ENCODE measurements at regions of chr15 and their contacts with region 1.

Region 1: DNA sequence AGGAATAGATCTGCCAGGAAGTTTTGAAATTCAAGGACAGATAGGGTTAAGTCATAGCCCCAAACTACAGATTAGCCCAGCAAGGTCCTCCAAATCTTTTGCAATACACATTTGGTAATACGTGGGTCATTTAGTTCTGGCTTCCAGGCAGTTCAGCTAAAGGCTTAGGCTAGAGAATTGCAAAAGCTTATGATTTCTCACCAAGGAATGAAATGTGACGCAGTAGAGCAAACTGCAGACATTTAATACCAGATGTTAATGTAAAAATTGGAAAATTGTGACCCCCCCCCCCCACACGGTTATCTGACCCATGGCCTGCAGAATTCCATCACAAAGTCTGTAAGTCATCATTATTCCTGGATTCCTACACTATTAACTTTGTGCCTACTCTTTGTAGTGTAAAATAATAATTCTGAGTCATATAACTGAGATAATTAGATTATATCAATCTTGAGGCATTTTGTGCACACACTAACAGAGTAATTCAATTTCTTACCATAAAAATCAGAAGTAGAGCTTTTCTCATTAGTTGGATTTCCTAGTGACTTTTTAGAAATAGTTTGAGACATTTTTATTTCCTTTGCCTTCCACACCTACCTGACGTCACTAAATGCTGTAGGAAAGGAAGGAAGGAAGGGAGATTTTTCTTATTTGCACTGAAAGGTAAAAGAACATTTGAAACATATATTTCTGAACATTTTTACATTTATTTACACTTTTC is 235.2 kb downstream of the DTWD1 start:
- DNase-seq: peak; percentile 99
- ATAC-seq: peak; percentile 74
- H3K4me3 ChIP-seq: no peak overlapping the region
- H3K27ac ChIP-seq: peak overlapping the region; percentile 100; the same call in 1 of the 2 replicates
- H3K4me1 ChIP-seq: peaks cover 24% of the 10 kb centered on the region
- H3K27me3 ChIP-seq: no peaks in the 10 kb centered on the region
- CTCF ChIP-seq: no peak
- POLR2A ChIP-seq: no peak
- RAD21 ChIP-seq: peak; percentile 17; the same call in 1 of the 2 replicates

Region 2: DNA sequence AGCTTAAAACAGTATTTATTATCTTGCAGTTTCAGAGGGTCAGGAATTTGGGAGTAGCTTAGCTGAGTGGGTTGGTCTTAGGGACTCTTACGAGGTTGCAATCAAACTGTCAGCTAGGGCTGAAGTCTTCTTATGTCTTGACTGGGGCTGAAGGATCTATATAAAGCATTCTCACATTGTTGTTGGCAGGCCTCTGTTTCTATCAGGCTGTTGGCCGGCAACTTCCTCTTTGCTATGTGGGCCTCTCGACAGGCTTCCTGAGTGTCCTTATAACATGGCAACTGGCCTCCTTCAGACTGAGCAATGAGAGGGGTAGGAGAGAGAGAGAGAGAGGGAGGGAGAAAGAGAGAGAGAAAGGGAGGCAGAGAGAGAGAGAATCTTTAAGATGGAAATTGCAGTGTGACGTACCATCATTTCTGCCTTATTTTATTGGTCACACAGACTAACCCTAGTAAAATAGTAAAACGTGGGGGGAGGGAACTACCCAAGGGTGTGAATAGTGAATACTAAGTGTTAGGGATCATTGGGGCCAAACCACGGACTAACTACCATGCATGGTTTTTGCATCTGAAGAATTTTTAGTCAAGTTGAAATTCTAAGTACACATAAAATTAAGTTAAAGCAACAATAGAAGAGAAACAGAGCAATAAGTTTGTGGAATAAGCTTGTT is 417.0 kb before region 1 on chr15:
- CTCF ChIA-PET with region 1: no interaction called
- POLR2A ChIA-PET with region 1: no interaction called
- dilution Hi-C with region 1: no loop called
- in situ Hi-C with region 1: no loop called
- intact Hi-C with region 1: loop called (anchors 5 kb)
- DNase-seq: no peak
- ATAC-seq: no peak; the same call in 1 of the 2 replicates
- H3K4me3 ChIP-seq: no peak overlapping the region
- H3K27ac ChIP-seq: peak overlapping the region; percentile 21
- H3K4me1 ChIP-seq: peaks cover 22% of the 10 kb centered on the region
- H3K27me3 ChIP-seq: no peaks in the 10 kb centered on the region
- CTCF ChIP-seq: no peak
- POLR2A ChIP-seq: no peak
- RAD21 ChIP-seq: no peak

Region 3: GRCh38 chr15:49901996-49902684 is 46.1 kb after region 1 on chr15:
- CTCF ChIA-PET with region 1: no interaction called
- POLR2A ChIA-PET with region 1: no interaction called
- dilution Hi-C with region 1: no loop called
- in situ Hi-C with region 1: no loop called
- intact Hi-C with region 1: no loop called
- DNase-seq: peak; percentile 65
- ATAC-seq: peak; percentile 65
- H3K4me3 ChIP-seq: no peak overlapping the region
- H3K27ac ChIP-seq: peak overlapping the region; percentile 98
- H3K4me1 ChIP-seq: peaks cover 24% of the 10 kb centered on the region
- H3K27me3 ChIP-seq: no peaks in the 10 kb centered on the region
- CTCF ChIP-seq: peak; percentile 66
- POLR2A ChIP-seq: no peak
- RAD21 ChIP-seq: peak; percentile 65

Region 4: DNA sequence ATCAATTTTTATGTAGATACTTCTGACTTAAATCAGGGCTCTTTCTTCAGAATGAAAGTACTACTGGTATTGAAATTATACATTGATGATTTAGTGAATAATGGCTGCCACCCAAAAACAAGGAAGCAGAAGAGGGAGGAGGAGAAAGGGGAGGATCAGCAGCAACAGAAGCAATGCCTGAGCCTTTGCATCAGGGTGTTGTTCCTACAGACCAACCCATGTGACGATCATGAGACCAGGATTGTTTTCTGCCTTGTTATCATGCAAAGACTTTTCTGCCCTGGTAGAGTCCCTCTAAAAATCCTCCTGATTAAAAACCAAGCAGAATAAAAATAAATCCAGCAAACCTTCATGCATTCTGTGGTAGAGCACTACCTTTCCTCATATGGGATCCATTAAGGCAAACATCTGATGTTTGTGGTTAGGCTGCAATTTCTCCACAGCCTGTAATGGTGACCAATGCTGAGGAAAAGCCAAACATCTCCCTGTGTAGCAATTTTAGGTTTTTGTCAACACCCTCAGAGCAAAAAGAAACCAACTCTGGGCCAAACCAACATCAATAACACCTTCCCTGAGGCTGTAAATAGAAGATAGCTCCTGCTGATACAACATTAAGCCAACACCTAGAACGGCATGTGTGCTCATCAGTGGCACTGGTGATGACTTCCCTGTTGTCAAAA is 71.3 kb after region 1 on chr15:
- CTCF ChIA-PET with region 1: no interaction called
- POLR2A ChIA-PET with region 1: no interaction called
- dilution Hi-C with region 1: no loop called
- in situ Hi-C with region 1: no loop called
- intact Hi-C with region 1: no loop called
- DNase-seq: peak; percentile 62
- ATAC-seq: peak; percentile 51; the same call in 1 of the 2 replicates
- H3K4me3 ChIP-seq: no peak overlapping the region
- H3K27ac ChIP-seq: peak overlapping the region; percentile 53; the same call in 1 of the 2 replicates
- H3K4me1 ChIP-seq: peaks cover 4% of the 10 kb centered on the region
- H3K27me3 ChIP-seq: no peaks in the 10 kb centered on the region
- CTCF ChIP-seq: no peak
- POLR2A ChIP-seq: no peak
- RAD21 ChIP-seq: no peak

Region 5: DNA sequence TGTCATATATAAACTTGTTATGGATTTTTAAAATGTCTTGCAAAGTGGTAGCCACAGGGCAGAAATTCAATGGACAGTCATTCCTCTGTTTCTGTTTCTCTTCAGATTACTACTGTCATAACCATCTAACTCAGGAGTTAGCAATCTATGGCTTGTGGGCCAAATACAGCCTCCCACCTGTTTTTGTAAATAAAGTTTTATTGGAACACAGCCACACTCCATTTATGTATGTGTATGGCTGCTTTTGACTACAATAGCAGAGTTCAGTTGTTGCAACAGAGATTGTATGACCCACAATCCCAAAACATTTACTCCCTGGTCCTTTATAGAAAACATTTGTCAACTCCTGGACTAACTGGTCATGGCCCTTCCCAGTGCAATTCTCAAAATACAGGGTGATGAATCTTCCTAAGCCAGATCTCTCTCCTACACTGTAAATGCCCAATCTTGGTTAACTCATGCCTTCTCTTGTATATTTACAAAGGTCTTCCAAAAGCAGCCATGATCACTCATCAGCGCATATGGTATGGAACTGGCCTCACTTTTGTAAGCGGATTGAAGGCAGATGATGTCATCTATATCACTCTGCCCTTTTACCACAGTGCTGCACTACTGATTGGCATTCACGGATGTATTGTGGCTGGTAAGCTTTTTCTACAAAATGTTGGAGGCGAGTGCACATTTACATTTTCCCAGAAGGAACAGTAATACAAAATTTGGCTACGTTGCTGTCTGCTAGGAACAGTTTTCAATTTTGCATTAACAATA is 346.1 kb after region 1 on chr15:
- CTCF ChIA-PET with region 1: no interaction called
- POLR2A ChIA-PET with region 1: no interaction called
- dilution Hi-C with region 1: no loop called
- in situ Hi-C with region 1: no loop called
- intact Hi-C with region 1: no loop called
- DNase-seq: peak; percentile 9
- ATAC-seq: no peak; the same call in none of the 2 replicates
- H3K4me3 ChIP-seq: no peak overlapping the region
- H3K27ac ChIP-seq: no peak overlapping the region
- H3K4me1 ChIP-seq: no peaks in the 10 kb centered on the region
- H3K27me3 ChIP-seq: no peaks in the 10 kb centered on the region; the same call in 1 of the 2 replicates
- CTCF ChIP-seq: no peak
- POLR2A ChIP-seq: no peak
- RAD21 ChIP-seq: no peak

Region 6: DNA sequence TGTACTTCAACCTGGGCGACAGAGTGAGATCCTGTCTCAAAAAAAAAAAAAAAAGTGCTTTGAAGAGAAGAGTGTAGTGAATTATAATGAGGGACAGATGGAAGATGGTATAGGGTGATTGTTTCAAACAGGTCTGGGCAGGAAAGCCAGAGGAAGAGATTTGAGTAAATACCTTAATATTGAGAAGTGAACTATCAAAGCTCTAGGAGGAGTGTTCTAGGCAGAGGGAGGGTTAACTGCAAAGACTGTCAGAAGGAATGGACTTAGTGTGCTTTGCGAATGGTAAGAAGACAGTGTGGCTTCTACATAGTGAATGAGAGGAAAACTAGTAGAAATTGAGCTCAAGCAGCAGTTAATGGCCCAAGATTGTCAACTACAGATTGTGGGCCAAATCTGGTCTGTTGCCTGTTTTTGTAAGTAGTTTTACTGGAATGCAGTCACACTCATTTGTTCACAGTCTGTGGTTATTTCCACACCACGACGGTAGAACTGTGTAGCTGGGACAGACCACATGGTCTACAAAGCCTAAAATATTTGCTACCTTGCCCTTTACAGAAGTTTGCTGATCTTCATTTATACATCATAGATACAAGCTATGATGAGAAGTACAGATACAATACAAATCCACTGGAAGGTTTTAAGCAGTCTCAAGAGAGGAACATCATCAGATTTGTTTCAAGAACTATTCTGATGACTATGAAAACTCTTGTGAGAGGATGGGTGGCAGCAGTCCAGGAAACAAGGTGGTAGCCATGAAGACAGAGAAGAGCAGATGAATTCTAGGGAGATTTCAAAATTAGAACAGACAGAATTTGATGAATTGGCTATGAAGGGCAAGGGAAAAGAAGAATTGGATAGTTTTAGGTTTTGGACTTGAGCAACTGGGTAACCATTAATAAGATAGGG is 706.9 kb after region 1 on chr15:
- CTCF ChIA-PET with region 1: no interaction called
- POLR2A ChIA-PET with region 1: no interaction called
- dilution Hi-C with region 1: no loop called
- in situ Hi-C with region 1: no loop called
- intact Hi-C with region 1: no loop called
- DNase-seq: peak; percentile 4
- ATAC-seq: no peak
- H3K4me3 ChIP-seq: no peak overlapping the region
- H3K27ac ChIP-seq: no peak overlapping the region
- H3K4me1 ChIP-seq: no peaks in the 10 kb centered on the region
- H3K27me3 ChIP-seq: no peaks in the 10 kb centered on the region
- CTCF ChIP-seq: no peak
- POLR2A ChIP-seq: no peak
- RAD21 ChIP-seq: no peak